ENCODE measurements at regions of chr5 and their contacts with region 1.

Region 1: GRCh38 chr5:74035521-74035981 is 409.6 kb downstream of the ARHGEF28 start:
- DNase-seq: peak in 3 of 5 donors; percentile 32 to 50 (median 38)
- ATAC-seq: peak; percentile 46 to 84 (median 69)
- H3K4me3 ChIP-seq: no peak overlapping the region
- H3K27ac ChIP-seq: no peak overlapping the region
- H3K4me1 ChIP-seq: peaks cover 0 to 14% (median 1%) of the 10 kb centered on the region in 12 donors
- H3K27me3 ChIP-seq: no peaks in the 10 kb centered on the region
- CTCF ChIP-seq: peak; percentile 16 to 69 (median 52)
- POLR2A ChIP-seq: no peak

Region 2: GRCh38 chr5:74017786-74018211 is 17.8 kb before region 1 on chr5:
- intact Hi-C with region 1: no loop called
- DNase-seq: peak in 1 of 5 donors; percentile 28
- ATAC-seq: peak in 2 of 4 donors; percentile 45 to 71
- H3K4me3 ChIP-seq: no peak overlapping the region
- H3K27ac ChIP-seq: no peak overlapping the region
- H3K4me1 ChIP-seq: peaks cover 0 to 5% (median 0%) of the 10 kb centered on the region in 12 donors
- H3K27me3 ChIP-seq: no peaks in the 10 kb centered on the region
- CTCF ChIP-seq: no peak
- POLR2A ChIP-seq: no peak

Region 3: DNA sequence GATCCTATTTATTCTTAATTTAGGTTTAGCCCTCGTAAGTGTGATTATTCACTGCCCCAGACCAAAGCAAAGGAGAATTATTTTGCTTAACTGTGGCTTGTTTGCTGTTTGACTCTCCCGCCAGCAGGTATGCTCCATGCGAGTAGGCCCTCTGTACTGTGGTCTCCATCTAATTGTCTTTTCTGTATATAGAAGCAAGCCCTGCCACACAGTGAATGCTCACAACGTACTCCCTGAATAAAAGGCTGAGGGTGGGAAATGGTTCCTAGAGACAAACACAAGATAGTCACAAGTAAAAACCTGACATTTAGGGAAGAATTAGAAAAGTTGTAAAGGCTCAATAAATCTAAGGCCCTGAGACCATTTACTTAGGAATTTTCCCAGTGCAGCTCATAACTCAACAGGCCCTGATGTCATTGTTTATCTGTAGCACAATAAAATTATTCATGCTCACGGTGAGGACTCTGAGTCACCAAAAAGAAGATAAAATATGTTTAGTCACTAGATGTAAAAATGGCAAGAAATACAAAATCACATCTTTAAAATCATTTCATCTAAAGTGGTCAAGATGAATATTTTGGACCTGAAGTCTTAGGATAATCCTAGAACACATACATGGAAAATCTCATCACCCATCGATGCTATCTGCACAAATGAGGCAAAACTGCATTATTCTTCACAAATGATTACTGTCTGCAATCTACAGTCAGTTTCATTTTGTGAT is 131.8 kb after region 1 on chr5:
- intact Hi-C with region 1: loop called in 1 of 10 experiments (anchors 10 kb)
- DNase-seq: no peak
- ATAC-seq: peak in 1 of 4 donors; percentile 66
- H3K4me3 ChIP-seq: no peak overlapping the region
- H3K27ac ChIP-seq: peak overlapping the region in 2 of 12 donors; percentile 26 to 27
- H3K4me1 ChIP-seq: peaks cover 0 to 32% (median 18%) of the 10 kb centered on the region in 12 donors
- H3K27me3 ChIP-seq: no peaks in the 10 kb centered on the region
- CTCF ChIP-seq: no peak
- POLR2A ChIP-seq: no peak

Region 4: DNA sequence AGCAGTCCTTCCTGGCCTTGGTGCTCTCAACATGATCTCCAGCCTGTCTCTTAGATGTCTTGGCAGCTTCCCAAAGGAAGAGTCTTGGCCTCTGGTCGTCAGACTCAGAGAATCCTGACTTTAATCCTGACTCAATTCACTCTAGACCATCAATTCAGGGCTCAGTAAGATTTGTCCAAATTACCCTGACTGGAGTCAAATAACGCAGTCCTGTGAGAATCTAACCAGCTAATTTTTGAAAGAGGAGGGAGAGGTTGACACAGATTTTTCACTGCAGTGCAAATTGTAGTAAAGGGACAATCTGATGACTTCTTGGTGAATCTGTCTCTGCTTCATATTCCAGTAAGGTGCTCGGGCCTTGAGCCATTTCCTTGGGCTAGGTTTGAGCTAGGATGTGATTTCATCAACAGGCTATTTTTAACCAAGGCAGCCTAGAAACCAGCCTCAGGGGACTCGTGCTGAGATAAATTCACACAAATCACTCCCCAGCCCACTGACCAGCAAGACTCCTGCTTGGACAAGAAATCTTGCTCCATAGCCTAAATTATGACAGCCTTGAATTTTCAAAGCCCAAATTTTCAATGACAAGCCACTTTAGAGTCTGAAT is 347.5 kb after region 1 on chr5:
- intact Hi-C with region 1: loop called in 1 of 10 experiments (anchors 10 kb)
- DNase-seq: peak in 4 of 5 donors; percentile 73 to 78 (median 76)
- ATAC-seq: peak; percentile 72 to 93 (median 86)
- H3K4me3 ChIP-seq: peak overlapping the region in 1 of 12 donors; percentile 8
- H3K27ac ChIP-seq: peak overlapping the region; percentile 31 to 90 (median 70)
- H3K4me1 ChIP-seq: peaks cover 7 to 58% (median 33%) of the 10 kb centered on the region in 12 donors
- H3K27me3 ChIP-seq: no peaks in the 10 kb centered on the region
- CTCF ChIP-seq: no peak
- POLR2A ChIP-seq: no peak

Region 5: GRCh38 chr5:74648835-74649293 is 613.3 kb after region 1 on chr5:
- intact Hi-C with region 1: loop called in 7 of 10 experiments (anchors 2 to 5 kb)
- DNase-seq: peak in 1 of 5 donors; percentile 35
- ATAC-seq: peak; percentile 67 to 95 (median 88)
- H3K4me3 ChIP-seq: peak overlapping the region in 2 of 12 donors; percentile 10 to 12
- H3K27ac ChIP-seq: no peak overlapping the region
- H3K4me1 ChIP-seq: peaks cover 0 to 16% (median 5%) of the 10 kb centered on the region in 12 donors
- H3K27me3 ChIP-seq: no peaks in the 10 kb centered on the region
- CTCF ChIP-seq: peak; percentile 58 to 84 (median 78)
- POLR2A ChIP-seq: no peak

Measured in heart left ventricle (tissue), 16 donors.